CD4-positive, alpha-beta T cell (primary cell): ENCODE measurements at regions of chr20 and their contacts with region 1.

Region 1: GRCh38 chr20:13784893-13785715 is at the starts of genes ESF1 and NDUFAF5:
- DNase-seq: peak; percentile 82 to 96 (median 88)
- ATAC-seq: peak; percentile 96
- H3K4me3 ChIP-seq: peak within 1 kb of the TSS; percentile 84
- H3K4me3 Mint-ChIP-seq: peak within 1 kb of the TSS; percentile 98
- H3K27ac ChIP-seq: peak within 1 kb of the TSS; percentile 79 to 89
- H3K27ac Mint-ChIP-seq: peak within 1 kb of the TSS; percentile 84
- H3K4me1 ChIP-seq: peaks cover 15% of the 10 kb centered on the region
- H3K4me1 Mint-ChIP-seq: peaks cover 64% of the 10 kb centered on the region
- H3K27me3 ChIP-seq: no peaks in the 10 kb centered on the region
- H3K27me3 Mint-ChIP-seq: no peaks in the 10 kb centered on the region
- CTCF ChIP-seq: no peak
- total RNA-seq, gene ESF1: 6.9 to 7.1 TPM
- total RNA-seq, gene NDUFAF5: 70.8 to 73.5 TPM

Region 2: DNA sequence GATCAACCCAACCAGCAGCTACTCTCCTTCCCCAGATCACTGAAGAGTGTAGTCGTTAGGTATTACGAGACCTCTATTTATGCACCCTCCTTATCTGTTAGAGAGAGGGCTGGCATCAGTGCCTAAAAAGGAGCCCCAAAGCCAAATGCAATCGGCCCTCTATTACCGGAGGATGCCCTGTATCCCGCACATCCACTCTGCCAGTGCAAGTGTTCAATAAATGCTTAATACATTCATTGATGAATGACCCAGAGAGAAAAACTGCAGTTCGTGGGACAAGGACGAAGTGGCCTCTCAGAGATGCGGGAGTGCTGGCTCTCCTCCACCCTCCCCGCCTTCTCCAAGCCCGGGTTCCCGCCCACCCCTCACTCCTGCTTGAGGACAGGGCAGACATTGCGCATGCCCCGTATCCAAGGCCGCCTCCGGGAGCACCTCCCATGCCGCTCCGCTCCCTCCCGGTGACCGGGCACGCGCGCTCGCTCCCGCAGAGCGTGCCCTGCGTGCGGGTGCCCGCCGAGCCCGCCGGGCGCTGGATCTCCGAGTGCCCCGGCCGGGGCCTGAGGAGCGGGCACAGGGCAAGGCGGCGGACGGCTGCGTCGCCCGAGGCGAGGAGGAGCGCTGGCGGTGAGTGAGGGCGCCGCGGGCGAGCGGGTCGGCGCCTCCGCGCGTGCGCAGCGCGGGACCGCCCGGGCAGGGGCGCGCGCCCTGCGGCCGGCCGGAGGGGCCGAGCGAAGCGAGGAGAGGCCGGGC is 1894.6 kb before region 1 on chr20:
- CTCF ChIA-PET with region 1: no interaction called
- POLR2A ChIA-PET with region 1: no interaction called
- intact Hi-C with region 1: loop called in 1 of 2 experiments (anchors 10 kb)
- DNase-seq: peak in 11 of 14 experiments; percentile 4 to 66 (median 39)
- ATAC-seq: peak; percentile 54
- H3K4me3 ChIP-seq: peak overlapping the region; percentile 48
- H3K4me3 Mint-ChIP-seq: peak overlapping the region; percentile 94
- H3K27ac ChIP-seq: no peak overlapping the region
- H3K27ac Mint-ChIP-seq: peak overlapping the region; percentile 29
- H3K4me1 ChIP-seq: no peaks in the 10 kb centered on the region
- H3K4me1 Mint-ChIP-seq: peaks cover 25% of the 10 kb centered on the region
- H3K27me3 ChIP-seq: peaks cover 3 to 6% of the 10 kb centered on the region in 2 experiments
- H3K27me3 Mint-ChIP-seq: peaks cover 16% of the 10 kb centered on the region
- CTCF ChIP-seq: no peak

Region 3: DNA sequence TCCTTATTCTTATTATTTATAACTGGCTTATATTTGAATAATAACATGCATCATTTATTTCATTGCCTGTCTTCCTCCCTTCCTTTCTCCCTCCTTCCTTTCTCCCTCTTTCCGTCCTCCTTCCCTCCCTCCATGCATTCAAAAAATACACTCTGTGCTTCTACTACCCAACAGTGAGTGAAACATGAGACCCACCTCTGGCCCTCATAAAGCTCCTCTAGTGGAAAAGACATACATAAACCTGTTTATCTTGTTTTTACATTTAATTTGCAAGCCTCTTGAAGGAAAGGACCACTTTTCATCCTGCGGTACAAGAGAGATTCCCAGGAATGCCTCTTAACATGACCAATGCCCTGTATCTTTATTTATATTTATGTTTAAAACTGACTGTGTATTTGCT is 585.8 kb before region 1 on chr20:
- CTCF ChIA-PET with region 1: no interaction called
- POLR2A ChIA-PET with region 1: no interaction called
- intact Hi-C with region 1: no loop called
- DNase-seq: no peak
- ATAC-seq: no peak
- H3K4me3 ChIP-seq: no peak overlapping the region
- H3K4me3 Mint-ChIP-seq: no peak overlapping the region
- H3K27ac ChIP-seq: no peak overlapping the region
- H3K27ac Mint-ChIP-seq: no peak overlapping the region
- H3K4me1 ChIP-seq: no peaks in the 10 kb centered on the region
- H3K4me1 Mint-ChIP-seq: no peaks in the 10 kb centered on the region
- H3K27me3 ChIP-seq: no peaks in the 10 kb centered on the region
- H3K27me3 Mint-ChIP-seq: no peaks in the 10 kb centered on the region
- CTCF ChIP-seq: no peak

Region 4: DNA sequence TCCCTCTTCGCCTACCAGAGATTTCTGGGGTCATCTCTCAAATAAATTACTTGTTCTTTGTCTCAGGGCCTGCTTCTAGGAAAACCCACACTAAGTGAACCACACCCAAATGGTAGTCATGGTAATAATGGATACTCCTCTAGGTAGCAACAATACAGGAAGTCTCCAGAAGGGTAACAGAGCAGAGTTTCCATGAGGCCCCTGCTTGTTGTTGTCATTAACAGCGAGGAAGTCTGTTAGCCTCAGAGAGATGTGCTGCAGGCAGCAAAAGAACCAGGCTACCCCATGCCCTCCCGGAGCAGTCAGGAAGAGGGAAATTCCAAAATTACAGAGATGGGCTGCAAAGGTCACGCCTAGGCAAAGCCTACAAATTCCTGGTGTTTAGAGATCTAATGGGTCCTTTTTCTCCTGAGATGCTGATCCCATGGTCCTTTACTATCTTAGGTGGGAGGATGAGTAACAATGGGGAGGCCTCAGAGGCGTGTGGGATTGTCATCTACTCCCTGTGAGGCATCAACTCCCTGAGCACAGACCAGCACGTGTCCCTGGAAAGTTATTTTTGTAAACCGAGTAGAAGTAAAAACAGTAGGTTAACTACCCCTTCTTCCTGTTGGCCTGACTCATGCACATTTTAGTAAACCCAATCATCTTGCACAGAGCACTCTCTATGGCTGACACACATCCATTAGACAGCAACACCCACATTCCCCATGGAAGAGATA is 553.9 kb before region 1 on chr20:
- CTCF ChIA-PET with region 1: no interaction called
- POLR2A ChIA-PET with region 1: no interaction called
- intact Hi-C with region 1: loop called in 1 of 2 experiments (anchors 10 kb)
- DNase-seq: peak in 12 of 14 experiments; percentile 11 to 90 (median 35)
- ATAC-seq: peak; percentile 96
- H3K4me3 ChIP-seq: no peak overlapping the region
- H3K4me3 Mint-ChIP-seq: peak overlapping the region; percentile 49
- H3K27ac ChIP-seq: peak overlapping the region; percentile 61 to 88
- H3K27ac Mint-ChIP-seq: peak overlapping the region; percentile 85
- H3K4me1 ChIP-seq: peaks cover 18% of the 10 kb centered on the region
- H3K4me1 Mint-ChIP-seq: peaks cover 41% of the 10 kb centered on the region
- H3K27me3 ChIP-seq: no peaks in the 10 kb centered on the region
- H3K27me3 Mint-ChIP-seq: no peaks in the 10 kb centered on the region
- CTCF ChIP-seq: no peak

Region 5: GRCh38 chr20:13638496-13639222 is 146.4 kb before region 1 on chr20 and contains the start of gene TASP1:
- CTCF ChIA-PET with region 1: interaction called, 3 read pairs
- POLR2A ChIA-PET with region 1: no interaction called
- intact Hi-C with region 1: loop called (anchors 2 kb)
- DNase-seq: peak; percentile 94 to 99 (median 97)
- ATAC-seq: peak; percentile 100
- H3K4me3 ChIP-seq: peak within 1 kb of the TSS; percentile 77
- H3K4me3 Mint-ChIP-seq: peak within 1 kb of the TSS; percentile 85
- H3K27ac ChIP-seq: peak within 1 kb of the TSS in 1 of 2 donors; percentile 49
- H3K27ac Mint-ChIP-seq: peak within 1 kb of the TSS; percentile 72
- H3K4me1 ChIP-seq: peaks cover 10% of the 10 kb centered on the region
- H3K4me1 Mint-ChIP-seq: peaks cover 19% of the 10 kb centered on the region
- H3K27me3 ChIP-seq: peaks cover 0 to 3% of the 10 kb centered on the region in 2 experiments
- H3K27me3 Mint-ChIP-seq: peaks cover 7% of the 10 kb centered on the region
- CTCF ChIP-seq: no peak
- total RNA-seq, gene TASP1: 10.7 to 11.3 TPM

Region 6: GRCh38 chr20:14134004-14134403 is 348.9 kb after region 1 on chr20:
- CTCF ChIA-PET with region 1: no interaction called
- POLR2A ChIA-PET with region 1: no interaction called
- intact Hi-C with region 1: no loop called
- DNase-seq: no peak
- ATAC-seq: no peak
- H3K4me3 ChIP-seq: no peak overlapping the region
- H3K4me3 Mint-ChIP-seq: no peak overlapping the region
- H3K27ac ChIP-seq: no peak overlapping the region
- H3K27ac Mint-ChIP-seq: no peak overlapping the region
- H3K4me1 ChIP-seq: no peaks in the 10 kb centered on the region
- H3K4me1 Mint-ChIP-seq: no peaks in the 10 kb centered on the region
- H3K27me3 ChIP-seq: no peaks in the 10 kb centered on the region
- H3K27me3 Mint-ChIP-seq: no peaks in the 10 kb centered on the region
- CTCF ChIP-seq: no peak